Prostate gland (tissue), 2 donors: ENCODE measurements at regions of chr16 and their contacts with region 1.

Region 1: DNA sequence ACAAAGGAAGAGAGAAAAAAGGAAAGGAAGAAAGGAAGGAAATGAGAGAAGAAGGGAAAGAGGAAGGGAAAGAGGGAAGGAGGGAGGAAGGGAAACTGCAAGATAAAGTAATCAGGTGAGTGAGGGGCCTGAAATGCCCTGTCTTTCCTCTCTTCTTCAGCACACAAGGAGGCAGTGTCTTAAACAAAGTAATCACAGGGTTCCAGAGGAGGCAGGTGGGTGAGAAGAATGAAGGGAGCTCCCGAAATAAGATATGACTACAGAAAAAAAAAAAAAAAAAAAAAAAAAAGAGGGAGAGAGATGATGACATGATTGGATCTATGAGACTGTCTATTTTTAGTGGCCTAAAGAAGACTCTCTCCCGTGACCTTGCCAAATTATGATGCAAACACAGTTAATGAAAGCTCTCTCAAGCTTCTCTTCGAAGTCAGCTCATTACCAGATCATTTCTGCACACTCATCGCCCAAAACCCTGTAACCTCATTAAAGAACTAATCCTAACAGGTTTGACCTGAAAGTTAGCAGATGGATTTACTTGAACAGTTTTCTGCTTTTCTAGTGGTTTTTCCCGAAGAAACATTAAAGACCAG is 53.6 kb downstream of the CDH11 start:
- DNase-seq: no peak
- H3K4me3 ChIP-seq: no peak overlapping the region
- H3K27ac ChIP-seq: no peak overlapping the region
- H3K4me1 ChIP-seq: no peaks in the 10 kb centered on the region
- H3K27me3 ChIP-seq: no peaks in the 10 kb centered on the region
- CTCF ChIP-seq: no peak
- POLR2A ChIP-seq: no peak

Region 2: GRCh38 chr16:65154321-65154720 is 86.1 kb after region 1 on chr16:
- intact Hi-C with region 1: no loop called
- DNase-seq: no peak
- H3K4me3 ChIP-seq: no peak overlapping the region
- H3K27ac ChIP-seq: no peak overlapping the region
- H3K4me1 ChIP-seq: no peaks in the 10 kb centered on the region
- H3K27me3 ChIP-seq: no peaks in the 10 kb centered on the region
- CTCF ChIP-seq: no peak
- POLR2A ChIP-seq: no peak

Region 3: DNA sequence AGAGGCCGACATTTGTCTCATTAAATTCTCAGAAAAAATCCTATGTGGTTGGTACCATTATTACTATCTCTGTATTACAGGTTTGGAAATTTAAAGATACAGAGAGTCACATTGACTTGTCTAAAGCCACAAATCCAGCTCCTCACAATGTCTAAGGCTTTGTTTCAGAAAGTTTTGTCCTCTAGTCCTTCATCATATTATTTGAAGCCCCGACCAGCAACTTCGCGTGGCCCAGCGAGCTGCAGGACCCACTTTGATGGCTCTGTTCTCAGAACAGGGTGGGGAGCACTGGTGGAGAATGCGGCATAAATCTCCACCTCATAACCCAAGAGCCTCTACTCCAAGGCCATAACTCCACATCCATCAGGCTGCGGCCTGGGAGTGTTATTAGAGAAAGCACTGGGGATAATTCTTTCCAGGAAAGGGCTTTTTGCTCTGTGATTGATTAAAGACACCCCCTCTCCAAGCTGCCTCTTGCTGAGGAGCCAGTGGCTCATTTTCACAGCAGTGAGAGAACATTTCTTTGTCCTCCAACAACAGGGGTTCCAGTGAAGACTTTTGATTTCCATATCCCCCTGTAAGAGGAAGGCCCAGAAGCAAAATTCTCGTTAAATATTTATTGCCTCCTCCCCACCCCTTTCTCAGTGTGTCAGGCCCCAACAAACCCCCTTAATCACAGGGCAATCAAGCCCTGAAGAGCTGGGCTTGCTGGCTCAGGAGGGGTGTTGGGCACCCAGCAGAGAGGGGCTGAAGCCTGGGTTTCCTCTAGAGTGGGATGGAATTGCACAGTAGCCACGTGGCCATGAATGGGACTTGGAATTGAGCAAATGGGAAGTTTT is 167.3 kb after region 1 on chr16:
- intact Hi-C with region 1: no loop called
- DNase-seq: no peak
- H3K4me3 ChIP-seq: no peak overlapping the region
- H3K27ac ChIP-seq: no peak overlapping the region
- H3K4me1 ChIP-seq: no peaks in the 10 kb centered on the region
- H3K27me3 ChIP-seq: no peaks in the 10 kb centered on the region
- CTCF ChIP-seq: no peak
- POLR2A ChIP-seq: no peak

Region 4: GRCh38 chr16:66270333-66270927 is 1202.2 kb after region 1 on chr16:
- intact Hi-C with region 1: loop called (anchors 10 kb)
- DNase-seq: peak; percentile 10
- H3K4me3 ChIP-seq: peak overlapping the region; percentile 11 to 16
- H3K27ac ChIP-seq: peak overlapping the region in 1 of 2 donors; percentile 24
- H3K4me1 ChIP-seq: no peaks in the 10 kb centered on the region
- H3K27me3 ChIP-seq: no peaks in the 10 kb centered on the region
- CTCF ChIP-seq: peak; percentile 86 to 98 (median 94)
- POLR2A ChIP-seq: no peak